ENCODE measurements at regions of chrX and their contacts with region 1.

Region 1: GRCh38 chrX:74890676-74891430 is 34.4 kb downstream of the NEXMIF start:
- DNase-seq: no peak
- H3K4me3 ChIP-seq: no peak overlapping the region
- H3K27ac ChIP-seq: no peak overlapping the region
- H3K4me1 ChIP-seq: no peaks in the 10 kb centered on the region
- H3K27me3 ChIP-seq: peaks cover 0 to 4% of the 10 kb centered on the region in 2 donors
- CTCF ChIP-seq: no peak
- POLR2A ChIP-seq: no peak

Region 2: GRCh38 chrX:74924449-74925225 is 33.8 kb after region 1 on chrX:
- intact Hi-C with region 1: loop called (anchors 2 kb)
- DNase-seq: peak; percentile 21 to 47
- H3K4me3 ChIP-seq: peak overlapping the region; percentile 44 to 69 (median 54)
- H3K27ac ChIP-seq: peak overlapping the region; percentile 60 to 77
- H3K4me1 ChIP-seq: no peaks in the 10 kb centered on the region
- H3K27me3 ChIP-seq: peaks cover 0 to 21% of the 10 kb centered on the region in 2 donors
- CTCF ChIP-seq: no peak
- POLR2A ChIP-seq: no peak

Measured in breast epithelium (tissue), 4 donors.